ENCODE measurements at regions of chr17 and their contacts with region 1.

Region 1: GRCh38 chr17:29369831-29370735 is 20.1 kb upstream of the TAOK1 start:
- DNase-seq: peak; percentile 50
- ATAC-seq: peak; percentile 98
- H3K4me3 ChIP-seq: no peak overlapping the region
- H3K27ac ChIP-seq: no peak overlapping the region
- H3K4me1 ChIP-seq: no peaks in the 10 kb centered on the region
- H3K27me3 ChIP-seq: no peaks in the 10 kb centered on the region
- CTCF ChIP-seq: peak; percentile 74 to 85 (median 76)
- EP300 ChIP-seq: no peak
- POLR2A ChIP-seq: no peak
- RAD21 ChIP-seq: peak; percentile 74

Region 2: GRCh38 chr17:29357821-29358232 is 12.3 kb before region 1 on chr17:
- CTCF ChIA-PET with region 1: interaction called, 33 read pairs
- POLR2A ChIA-PET with region 1: no interaction called
- RAD21 ChIA-PET with region 1: interaction called, 3 read pairs
- SMC1A ChIA-PET with region 1: interaction called, 5 read pairs
- in situ Hi-C with region 1: no loop called
- intact Hi-C with region 1: no loop called
- DNase-seq: peak; percentile 19
- ATAC-seq: peak; percentile 84
- H3K4me3 ChIP-seq: no peak overlapping the region
- H3K27ac ChIP-seq: no peak overlapping the region
- H3K4me1 ChIP-seq: peaks cover 7% of the 10 kb centered on the region; the same call in 1 of the 2 replicates
- H3K27me3 ChIP-seq: no peaks in the 10 kb centered on the region
- CTCF ChIP-seq: no peak
- EP300 ChIP-seq: no peak
- POLR2A ChIP-seq: no peak
- RAD21 ChIP-seq: no peak

Region 3: DNA sequence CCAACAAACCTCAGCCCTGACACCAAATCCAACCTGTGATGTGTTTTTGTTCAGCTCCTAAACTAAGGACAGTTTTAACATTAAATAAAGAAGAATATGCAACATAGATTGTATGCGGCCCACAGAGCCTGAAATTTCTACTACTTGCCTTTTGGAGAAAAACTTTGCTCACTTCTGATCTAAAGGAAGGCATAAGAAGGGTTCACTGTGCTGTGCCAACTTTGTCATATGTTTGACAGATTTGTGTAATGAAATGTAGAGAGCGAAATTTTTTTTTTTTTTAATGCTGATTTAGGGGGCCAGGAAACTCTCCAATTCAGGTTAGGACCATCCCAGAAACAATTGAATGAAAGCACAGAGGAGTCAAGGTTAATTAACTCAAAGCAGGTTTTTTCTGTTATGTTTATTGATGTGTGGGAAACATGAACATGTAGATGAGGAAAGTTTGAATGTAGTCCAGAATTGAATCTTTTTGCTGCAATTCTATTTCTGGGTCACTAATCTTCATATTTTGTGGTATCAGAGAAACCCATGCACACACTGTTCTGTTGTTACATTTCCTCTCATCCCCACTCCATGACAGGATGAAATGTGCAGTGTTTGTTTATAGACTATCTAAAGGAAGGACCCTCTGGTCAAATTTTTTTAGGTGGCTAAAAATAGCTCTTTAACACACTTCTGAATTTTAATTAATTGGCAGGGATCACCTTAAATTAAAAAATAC is 91.6 kb after region 1 on chr17:
- CTCF ChIA-PET with region 1: interaction called, 4 read pairs
- POLR2A ChIA-PET with region 1: no interaction called
- RAD21 ChIA-PET with region 1: no interaction called
- SMC1A ChIA-PET with region 1: interaction called, 3 read pairs
- in situ Hi-C with region 1: no loop called
- intact Hi-C with region 1: loop called (anchors 5 kb)
- DNase-seq: no peak
- ATAC-seq: no peak
- H3K4me3 ChIP-seq: no peak overlapping the region
- H3K27ac ChIP-seq: no peak overlapping the region
- H3K4me1 ChIP-seq: no peaks in the 10 kb centered on the region
- H3K27me3 ChIP-seq: no peaks in the 10 kb centered on the region
- CTCF ChIP-seq: no peak
- EP300 ChIP-seq: no peak
- POLR2A ChIP-seq: no peak
- RAD21 ChIP-seq: no peak

Region 4: DNA sequence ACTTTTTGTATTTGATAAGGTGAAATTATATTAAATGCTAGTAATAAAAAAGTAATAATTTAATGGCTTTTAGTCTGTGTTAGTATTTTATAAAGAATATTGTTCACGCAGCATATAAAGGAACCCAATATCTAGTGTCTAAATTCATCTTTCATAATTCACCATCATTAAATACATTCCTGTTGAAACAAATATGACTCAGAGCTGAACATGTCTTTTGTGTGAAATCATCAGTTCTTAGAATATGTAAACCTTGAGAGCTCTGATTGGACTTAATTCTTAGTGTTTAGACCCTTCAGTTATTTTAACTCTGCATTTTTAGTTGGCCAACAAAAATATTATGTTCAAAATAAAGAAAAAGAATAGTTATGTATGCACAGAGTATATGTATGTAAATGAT is 124.9 kb after region 1 on chr17:
- CTCF ChIA-PET with region 1: interaction called, 20 read pairs
- POLR2A ChIA-PET with region 1: no interaction called
- RAD21 ChIA-PET with region 1: no interaction called
- SMC1A ChIA-PET with region 1: interaction called, 4 read pairs
- in situ Hi-C with region 1: no loop called
- intact Hi-C with region 1: no loop called
- DNase-seq: no peak
- ATAC-seq: no peak
- H3K4me3 ChIP-seq: no peak overlapping the region
- H3K27ac ChIP-seq: no peak overlapping the region
- H3K4me1 ChIP-seq: no peaks in the 10 kb centered on the region
- H3K27me3 ChIP-seq: no peaks in the 10 kb centered on the region
- CTCF ChIP-seq: no peak
- EP300 ChIP-seq: no peak
- POLR2A ChIP-seq: no peak
- RAD21 ChIP-seq: no peak

Region 5: GRCh38 chr17:29561554-29562517 is 191.8 kb after region 1 on chr17:
- CTCF ChIA-PET with region 1: interaction called, 21 read pairs
- POLR2A ChIA-PET with region 1: no interaction called
- RAD21 ChIA-PET with region 1: interaction called, 20 read pairs
- SMC1A ChIA-PET with region 1: interaction called, 11 read pairs
- in situ Hi-C with region 1: no loop called
- intact Hi-C with region 1: no loop called
- DNase-seq: no peak
- ATAC-seq: no peak
- H3K4me3 ChIP-seq: no peak overlapping the region
- H3K27ac ChIP-seq: no peak overlapping the region
- H3K4me1 ChIP-seq: peaks cover 42% of the 10 kb centered on the region
- H3K27me3 ChIP-seq: no peaks in the 10 kb centered on the region
- CTCF ChIP-seq: no peak
- EP300 ChIP-seq: no peak
- POLR2A ChIP-seq: no peak
- RAD21 ChIP-seq: no peak